PC-9 (cell line): ENCODE measurements at regions of chr20 and their contacts with region 1.

Region 1: DNA sequence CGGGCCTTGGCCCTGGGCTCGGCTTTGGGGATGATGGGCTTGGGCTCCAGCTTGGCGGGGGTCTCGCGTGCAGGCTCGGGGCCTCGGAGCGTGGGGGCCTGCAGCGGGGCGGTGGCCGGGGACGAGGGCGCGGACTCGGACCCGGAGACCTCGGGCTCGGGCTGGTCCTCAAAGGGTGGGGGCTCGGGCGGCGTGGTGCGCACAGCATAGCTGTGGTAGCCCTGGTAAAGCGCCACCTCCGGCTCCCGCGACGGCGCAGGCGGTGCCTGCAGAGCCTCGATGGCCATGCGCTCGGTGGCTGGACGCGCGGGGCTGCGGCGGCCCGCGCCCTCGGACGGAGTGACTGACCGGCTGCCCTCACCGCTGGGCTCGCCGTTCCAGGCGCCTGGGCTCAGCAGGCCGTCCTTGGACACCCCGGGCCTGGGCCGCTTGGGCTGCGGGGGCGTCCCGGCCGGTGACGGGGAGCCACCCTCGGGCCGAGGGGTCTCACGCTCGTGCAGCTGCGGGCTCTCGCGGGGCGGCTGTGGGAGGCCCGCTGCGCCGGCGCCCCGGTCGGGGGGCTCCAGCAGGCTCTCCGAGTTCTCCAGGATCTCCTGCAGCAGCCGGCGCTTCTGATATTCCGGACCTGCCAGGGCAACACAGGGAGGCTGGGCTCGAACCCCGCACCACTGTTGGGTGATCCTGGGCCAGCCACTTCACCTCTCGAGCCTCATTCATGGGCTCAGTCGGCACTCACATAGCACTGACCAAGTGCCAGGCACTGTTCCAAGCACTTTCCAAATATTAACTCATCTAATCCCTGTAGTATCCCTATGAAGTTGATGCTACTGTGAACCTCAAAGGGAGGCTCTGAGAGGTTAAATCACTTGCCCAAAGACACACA is 71.0 kb downstream of the JPH2 start:
- DNase-seq: no peak
- H3K4me3 ChIP-seq: no peak overlapping the region
- H3K27ac ChIP-seq: no peak overlapping the region
- H3K4me1 ChIP-seq: peaks cover 7% of the 10 kb centered on the region; the same call in 1 of the 2 replicates
- H3K27me3 ChIP-seq: no peaks in the 10 kb centered on the region
- CTCF ChIP-seq: no peak

Region 2: DNA sequence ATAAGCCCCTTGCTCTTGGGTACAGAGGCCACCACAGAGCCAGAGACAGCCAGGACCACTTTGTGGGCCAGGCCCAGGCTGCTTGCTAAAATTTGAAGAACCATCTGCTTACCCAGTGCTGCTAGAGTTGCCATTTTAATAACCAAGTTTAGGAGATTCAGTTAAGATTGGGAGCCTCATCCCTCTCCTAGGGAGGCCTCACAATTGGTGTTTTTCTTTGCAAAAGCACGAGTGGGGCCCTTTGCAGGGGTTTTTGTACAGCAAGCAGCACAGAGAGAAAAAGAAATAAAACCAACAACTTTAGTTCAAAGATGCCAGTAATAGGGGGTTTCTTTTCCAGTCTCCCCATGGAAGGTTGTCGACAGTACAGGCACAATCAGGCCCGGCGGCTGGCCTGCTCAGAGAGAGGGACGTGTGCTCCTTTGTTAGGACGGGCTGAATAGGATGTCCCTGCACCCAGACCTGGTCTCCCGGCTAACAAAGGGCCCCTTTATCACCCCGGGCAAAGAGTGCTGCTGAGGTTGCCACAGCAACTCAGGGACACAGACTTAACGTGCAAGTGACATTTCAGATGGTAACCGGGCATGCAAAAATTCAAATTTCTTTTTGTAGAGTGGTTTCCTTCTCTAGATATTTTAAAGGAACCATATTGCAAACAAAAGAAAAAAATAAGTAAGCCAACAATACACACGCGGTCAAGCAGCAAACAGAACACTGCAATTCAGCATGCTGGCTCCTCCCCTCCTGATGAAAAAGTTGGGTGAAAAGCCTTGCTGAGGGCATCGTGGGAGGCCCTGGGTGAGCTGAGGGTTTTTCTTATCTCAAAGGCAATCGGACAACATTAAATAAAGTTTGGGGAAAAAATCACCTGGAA is 211.8 kb before region 1 on chr20:
- CTCF ChIA-PET with region 1: no interaction called
- POLR2A ChIA-PET with region 1: no interaction called
- intact Hi-C with region 1: no loop called
- DNase-seq: no peak
- H3K4me3 ChIP-seq: no peak overlapping the region
- H3K27ac ChIP-seq: no peak overlapping the region
- H3K4me1 ChIP-seq: peaks cover 14% of the 10 kb centered on the region
- H3K27me3 ChIP-seq: no peaks in the 10 kb centered on the region
- CTCF ChIP-seq: no peak

Region 3: GRCh38 chr20:44210422-44211176 is 94.6 kb after region 1 on chr20 and contains the start of gene OSER1:
- CTCF ChIA-PET with region 1: no interaction called
- POLR2A ChIA-PET with region 1: interaction called, 3 read pairs
- intact Hi-C with region 1: loop called (anchors 2 kb)
- DNase-seq: peak; percentile 95 to 99
- H3K4me3 ChIP-seq: peak within 1 kb of the TSS; percentile 98
- H3K27ac ChIP-seq: peak within 1 kb of the TSS; percentile 89
- H3K4me1 ChIP-seq: peaks cover 44% of the 10 kb centered on the region
- H3K27me3 ChIP-seq: no peaks in the 10 kb centered on the region
- CTCF ChIP-seq: no peak
- total RNA-seq, gene OSER1: 113 and 136 TPM in 2 replicates

Region 4: GRCh38 chr20:44310664-44311639 is 194.9 kb after region 1 on chr20 and contains the start of gene FITM2:
- CTCF ChIA-PET with region 1: interaction called, 11 read pairs
- POLR2A ChIA-PET with region 1: interaction called, 3 read pairs
- intact Hi-C with region 1: loop called (anchors 2 kb)
- DNase-seq: peak; percentile 86 to 98
- H3K4me3 ChIP-seq: peak within 1 kb of the TSS; percentile 69
- H3K27ac ChIP-seq: no peak within 1 kb of the TSS
- H3K4me1 ChIP-seq: peaks cover 10% of the 10 kb centered on the region
- H3K27me3 ChIP-seq: no peaks in the 10 kb centered on the region
- CTCF ChIP-seq: peak; percentile 94
- total RNA-seq, gene FITM2: 6.1 and 7.4 TPM in 2 replicates

Region 5: DNA sequence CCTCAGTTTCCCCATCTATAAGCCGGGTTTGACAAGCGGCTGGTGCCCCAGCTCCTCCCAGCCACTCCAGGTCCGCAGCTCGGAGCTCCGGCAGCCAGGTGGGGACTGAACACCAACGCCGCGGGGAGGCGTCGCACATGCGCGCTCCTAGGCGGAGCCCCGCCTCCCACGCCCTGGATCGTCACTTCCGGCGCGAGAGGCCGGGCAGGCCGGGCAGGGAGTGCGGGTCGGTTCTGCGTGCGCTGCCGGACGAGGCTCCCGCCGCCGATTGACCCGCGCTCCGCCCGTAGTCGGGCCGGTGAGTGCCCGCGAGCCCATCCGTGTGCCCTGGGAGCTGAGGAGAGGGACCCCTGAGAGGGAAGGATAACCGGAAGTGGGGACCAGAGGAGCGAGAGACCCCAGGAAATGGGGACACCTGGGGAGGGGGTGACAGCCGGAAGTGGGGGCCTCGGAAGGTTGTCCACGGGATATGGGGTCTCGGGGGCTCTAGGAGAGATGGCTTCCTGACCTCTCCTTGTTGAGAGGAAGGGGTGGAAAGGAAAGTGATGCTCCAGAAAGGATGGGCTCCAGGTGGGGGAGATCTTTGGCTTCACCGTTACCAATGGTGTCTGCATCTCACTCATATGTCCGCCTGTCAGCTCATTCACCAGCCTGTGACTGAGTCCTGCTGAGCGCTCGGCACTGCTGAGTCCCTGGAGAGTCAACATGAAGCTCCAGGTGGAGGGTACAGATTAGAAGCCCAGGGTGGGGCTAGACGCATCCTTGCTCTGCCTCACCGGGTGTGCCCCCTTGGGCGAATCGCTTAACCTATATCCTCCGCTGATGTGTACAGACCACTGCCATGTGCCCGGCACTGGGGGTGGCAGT is 359.9 kb after region 1 on chr20 and contains the start of gene TTPAL:
- CTCF ChIA-PET with region 1: interaction called, 3 read pairs
- POLR2A ChIA-PET with region 1: no interaction called
- intact Hi-C with region 1: loop called (anchors 1 kb)
- DNase-seq: peak; percentile 77 to 93
- H3K4me3 ChIP-seq: peak within 1 kb of the TSS; percentile 88
- H3K27ac ChIP-seq: peak within 1 kb of the TSS; percentile 37
- H3K4me1 ChIP-seq: peaks cover 22% of the 10 kb centered on the region
- H3K27me3 ChIP-seq: no peaks in the 10 kb centered on the region
- CTCF ChIP-seq: peak; percentile 31; the same call in 1 of the 2 replicates
- total RNA-seq, gene TTPAL: 28.5 and 31.3 TPM in 2 replicates